ENCODE measurements at regions of chr11 and their contacts with region 1.

Region 1: DNA sequence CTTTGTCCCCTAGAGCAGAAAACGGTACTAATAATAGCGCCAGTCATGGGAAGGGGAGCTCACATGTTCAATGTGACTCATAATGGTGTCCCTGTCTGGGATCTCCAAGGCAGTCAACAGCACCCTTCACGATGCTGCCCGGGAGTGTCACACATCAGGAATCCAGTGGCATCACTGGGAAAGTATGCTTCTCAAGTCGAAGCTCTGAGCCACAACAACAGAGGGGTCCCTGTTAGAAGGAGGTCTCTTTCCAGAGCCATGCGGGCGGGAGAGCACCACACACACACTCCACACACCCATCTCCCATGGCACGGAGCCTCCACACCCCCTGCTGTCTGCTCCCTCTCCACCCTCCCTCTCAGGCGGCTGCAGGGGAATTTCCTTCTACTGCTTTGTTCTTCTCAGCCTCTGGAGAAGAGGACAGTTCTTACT is 119.7 kb downstream of the ETS1 start:
- DNase-seq: no peak
- ATAC-seq: peak; percentile 27 to 44
- H3K4me3 ChIP-seq: no peak overlapping the region
- H3K27ac ChIP-seq: peak overlapping the region; percentile 60
- H3K4me1 ChIP-seq: peaks cover 94% of the 10 kb centered on the region
- H3K27me3 ChIP-seq: no peaks in the 10 kb centered on the region
- CTCF ChIP-seq: no peak

Region 2: GRCh38 chr11:128517457-128518230 is 50.0 kb after region 1 on chr11:
- intact Hi-C with region 1: loop called (anchors 10 kb)
- DNase-seq: no peak
- ATAC-seq: no peak
- H3K4me3 ChIP-seq: peak overlapping the region; percentile 71
- H3K27ac ChIP-seq: peak overlapping the region; percentile 95
- H3K4me1 ChIP-seq: peaks cover 59% of the 10 kb centered on the region
- H3K27me3 ChIP-seq: no peaks in the 10 kb centered on the region
- CTCF ChIP-seq: no peak